Activated T-helper 1 cell treated with anti-CD3 and anti-CD28 coated beads, Interleukin-12 subunit alpha, Interleukin-12 subunit beta, Interleukin-2, Interleukin-4 antibody, amounts not matched to agents 30 ng/mL and 10 ng/mL and 1 ng/mL, durations not matched to agents 14 hours and 24 hours and 36 hours (primary cell): ENCODE measurements at regions of chr6 and their contacts with region 1.

Region 1: DNA sequence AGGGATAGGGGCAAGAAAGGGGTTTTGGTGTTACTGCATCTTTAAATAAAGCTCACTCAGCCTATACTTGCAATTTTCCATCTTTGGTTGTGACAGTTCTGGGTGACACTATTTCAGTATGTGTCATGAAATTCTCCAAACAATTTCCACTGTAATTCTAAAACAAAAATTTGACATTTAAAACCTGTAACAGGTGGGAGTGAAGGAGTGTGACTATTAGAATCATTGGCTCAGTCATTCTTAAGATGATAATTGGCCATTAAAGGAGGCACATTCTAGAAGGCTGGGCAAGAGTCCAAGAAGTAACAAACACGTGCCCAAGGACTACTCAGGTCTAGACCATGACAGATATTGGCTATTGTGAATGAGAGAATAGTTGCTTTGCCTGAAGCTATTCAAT is 153.3 kb upstream of the ARG1 start:
- DNase-seq: no peak
- H3K4me3 Mint-ChIP-seq: peak overlapping the region; percentile 16
- H3K27ac Mint-ChIP-seq: peak overlapping the region; percentile 94
- H3K4me1 Mint-ChIP-seq: peaks cover 41% of the 10 kb centered on the region
- H3K27me3 Mint-ChIP-seq: no peaks in the 10 kb centered on the region

Region 2: GRCh38 chr6:131015630-131016263 is 404.0 kb before region 1 on chr6:
- intact Hi-C with region 1: no loop called
- DNase-seq: no peak
- H3K4me3 Mint-ChIP-seq: no peak overlapping the region
- H3K27ac Mint-ChIP-seq: no peak overlapping the region
- H3K4me1 Mint-ChIP-seq: no peaks in the 10 kb centered on the region
- H3K27me3 Mint-ChIP-seq: peaks cover 8% of the 10 kb centered on the region

Region 3: GRCh38 chr6:131156411-131156810 is 263.3 kb before region 1 on chr6:
- intact Hi-C with region 1: no loop called
- DNase-seq: no peak
- H3K4me3 Mint-ChIP-seq: no peak overlapping the region
- H3K27ac Mint-ChIP-seq: no peak overlapping the region
- H3K4me1 Mint-ChIP-seq: no peaks in the 10 kb centered on the region
- H3K27me3 Mint-ChIP-seq: no peaks in the 10 kb centered on the region

Region 4: GRCh38 chr6:131269565-131270391 is 149.9 kb before region 1 on chr6:
- intact Hi-C with region 1: loop called (anchors 1 kb)
- DNase-seq: no peak
- H3K4me3 Mint-ChIP-seq: no peak overlapping the region
- H3K27ac Mint-ChIP-seq: no peak overlapping the region
- H3K4me1 Mint-ChIP-seq: no peaks in the 10 kb centered on the region
- H3K27me3 Mint-ChIP-seq: no peaks in the 10 kb centered on the region

Region 5: DNA sequence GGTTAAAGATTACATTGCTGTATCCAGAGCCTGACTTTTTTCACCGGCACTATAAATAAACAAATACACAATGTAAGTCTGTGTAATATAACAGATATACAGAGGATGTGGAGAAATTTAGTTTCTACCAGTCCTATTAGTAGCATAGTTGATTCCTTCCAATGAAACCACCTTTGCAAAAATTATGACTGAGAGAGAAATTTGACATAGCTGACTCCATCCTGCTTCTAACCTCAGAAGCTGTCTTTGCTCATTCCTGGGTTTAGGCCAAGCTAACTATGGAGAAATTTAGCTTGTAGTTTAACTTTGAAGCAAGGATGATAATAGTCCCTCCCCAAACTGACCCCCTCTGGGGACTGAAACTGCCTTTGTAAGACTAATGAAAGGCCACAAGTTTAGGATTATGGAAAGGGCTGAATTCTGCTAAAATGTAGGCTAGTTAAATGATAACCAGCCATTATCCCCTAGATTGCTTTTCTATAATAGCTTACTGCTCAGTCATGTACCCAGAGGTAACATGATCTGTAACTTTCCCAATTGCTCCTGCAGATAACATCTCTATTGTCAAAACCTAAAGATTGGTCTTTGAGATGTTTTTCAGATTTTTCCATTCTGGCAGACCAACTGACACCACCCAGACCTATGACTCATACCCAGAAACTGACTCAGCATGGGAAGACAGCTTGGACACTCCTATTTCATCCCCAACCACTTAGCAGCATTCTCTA is 19.5 kb before region 1 on chr6:
- intact Hi-C with region 1: loop called (anchors 1 kb)
- DNase-seq: no peak
- H3K4me3 Mint-ChIP-seq: no peak overlapping the region
- H3K27ac Mint-ChIP-seq: peak overlapping the region; percentile 47
- H3K4me1 Mint-ChIP-seq: peaks cover 15% of the 10 kb centered on the region
- H3K27me3 Mint-ChIP-seq: no peaks in the 10 kb centered on the region

Region 6: DNA sequence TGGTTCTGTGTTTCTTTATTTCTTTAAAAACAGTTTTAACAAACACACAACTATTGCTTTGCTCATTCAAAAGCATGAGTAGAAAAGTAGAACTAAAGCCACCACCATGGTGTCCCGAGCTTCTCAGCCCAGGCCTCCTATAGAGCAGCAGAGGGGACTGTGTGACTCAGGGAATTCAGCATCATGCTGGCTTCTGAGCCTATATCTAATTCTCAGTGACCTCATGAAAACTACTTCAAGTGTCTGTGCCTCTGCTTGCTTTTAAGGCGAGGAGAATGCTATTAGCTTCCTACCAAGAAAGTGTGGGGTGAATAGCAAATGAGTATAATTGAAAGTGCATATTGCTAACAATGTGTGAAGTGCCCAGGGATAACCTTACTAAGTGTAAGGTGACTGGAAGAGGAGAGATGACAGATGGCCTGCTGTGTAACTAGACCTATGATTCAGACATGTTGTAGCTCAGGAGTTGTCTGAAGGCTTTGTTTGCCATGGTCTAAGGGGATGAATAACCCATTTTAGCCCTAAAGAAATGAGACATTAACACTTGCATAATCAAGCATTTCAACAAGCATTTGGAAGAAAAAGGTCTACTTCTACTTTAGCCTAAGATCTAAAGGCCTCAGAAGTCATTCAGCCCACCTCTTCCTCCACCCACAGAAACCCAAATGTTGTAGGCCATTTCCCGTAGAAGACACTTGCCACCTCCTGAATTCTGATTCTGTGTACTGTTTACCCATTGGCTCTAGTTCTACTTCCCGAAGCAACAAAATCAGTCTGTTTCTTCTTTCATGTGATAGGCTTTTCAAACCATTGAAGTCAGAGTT is 31.8 kb after region 1 on chr6:
- intact Hi-C with region 1: loop called (anchors 2 kb)
- DNase-seq: no peak
- H3K4me3 Mint-ChIP-seq: peak overlapping the region; percentile 28
- H3K27ac Mint-ChIP-seq: peak overlapping the region; percentile 87
- H3K4me1 Mint-ChIP-seq: peaks cover 46% of the 10 kb centered on the region
- H3K27me3 Mint-ChIP-seq: no peaks in the 10 kb centered on the region

Region 7: GRCh38 chr6:131565056-131565455 is 145.4 kb after region 1 on chr6:
- intact Hi-C with region 1: no loop called
- DNase-seq: no peak
- H3K4me3 Mint-ChIP-seq: no peak overlapping the region
- H3K27ac Mint-ChIP-seq: no peak overlapping the region
- H3K4me1 Mint-ChIP-seq: peaks cover 6% of the 10 kb centered on the region
- H3K27me3 Mint-ChIP-seq: peaks cover under 1% of the 10 kb centered on the region